Right ventricle myocardium superior (tissue), 1 donor: ENCODE measurements at regions of chr5 and their contacts with region 1.

Region 1: DNA sequence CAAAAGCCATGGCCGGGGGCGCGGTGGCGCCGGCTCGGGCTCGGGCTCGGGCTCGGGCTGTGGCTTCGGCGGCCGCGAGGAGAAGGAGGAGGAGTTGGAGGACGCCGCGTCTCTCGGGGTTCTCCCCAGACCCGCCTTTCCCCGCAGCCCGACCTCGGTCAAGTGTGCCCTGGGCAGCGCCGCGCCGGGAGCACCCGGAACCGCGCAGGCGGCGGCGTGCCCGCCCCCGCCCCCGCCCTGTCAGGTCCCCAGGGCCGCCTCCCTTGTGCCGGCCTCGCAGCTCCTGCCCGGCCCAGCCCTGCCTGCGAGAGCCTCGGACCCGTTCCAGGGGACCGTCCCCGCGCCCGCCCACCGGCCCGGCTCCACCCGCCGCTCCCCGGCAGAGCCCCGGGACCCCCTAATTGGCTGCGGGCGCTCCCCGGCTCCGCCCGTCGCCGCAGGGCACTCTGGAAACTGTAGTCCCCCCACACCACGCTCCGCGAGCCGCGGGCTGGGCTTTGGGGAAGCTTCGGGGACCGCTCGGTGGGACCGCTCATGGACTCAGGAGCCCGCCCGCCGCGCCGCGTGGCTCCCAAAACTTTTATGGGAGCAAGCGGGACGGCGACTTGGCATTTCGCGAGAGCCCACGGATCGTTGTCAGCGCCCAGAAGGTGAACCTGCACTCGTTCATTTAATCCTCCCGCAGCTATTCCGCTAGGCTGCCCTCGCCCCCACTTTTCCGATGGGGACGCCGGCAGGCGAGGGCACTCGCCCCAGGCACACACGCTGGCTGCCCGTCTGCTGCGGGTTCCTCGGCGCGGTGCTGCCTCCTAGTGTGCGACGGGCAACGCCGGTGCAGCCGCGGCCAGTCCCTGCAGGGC is at the start of gene STK10:
- DNase-seq: peak; percentile 96
- ATAC-seq: peak; percentile 96
- total RNA-seq, gene STK10: 8.8 TPM

Region 2: GRCh38 chr5:171913987-171914273 is 274.3 kb before region 1 on chr5:
- intact Hi-C with region 1: loop called (anchors 10 kb)
- DNase-seq: no peak
- ATAC-seq: no peak

Region 3: DNA sequence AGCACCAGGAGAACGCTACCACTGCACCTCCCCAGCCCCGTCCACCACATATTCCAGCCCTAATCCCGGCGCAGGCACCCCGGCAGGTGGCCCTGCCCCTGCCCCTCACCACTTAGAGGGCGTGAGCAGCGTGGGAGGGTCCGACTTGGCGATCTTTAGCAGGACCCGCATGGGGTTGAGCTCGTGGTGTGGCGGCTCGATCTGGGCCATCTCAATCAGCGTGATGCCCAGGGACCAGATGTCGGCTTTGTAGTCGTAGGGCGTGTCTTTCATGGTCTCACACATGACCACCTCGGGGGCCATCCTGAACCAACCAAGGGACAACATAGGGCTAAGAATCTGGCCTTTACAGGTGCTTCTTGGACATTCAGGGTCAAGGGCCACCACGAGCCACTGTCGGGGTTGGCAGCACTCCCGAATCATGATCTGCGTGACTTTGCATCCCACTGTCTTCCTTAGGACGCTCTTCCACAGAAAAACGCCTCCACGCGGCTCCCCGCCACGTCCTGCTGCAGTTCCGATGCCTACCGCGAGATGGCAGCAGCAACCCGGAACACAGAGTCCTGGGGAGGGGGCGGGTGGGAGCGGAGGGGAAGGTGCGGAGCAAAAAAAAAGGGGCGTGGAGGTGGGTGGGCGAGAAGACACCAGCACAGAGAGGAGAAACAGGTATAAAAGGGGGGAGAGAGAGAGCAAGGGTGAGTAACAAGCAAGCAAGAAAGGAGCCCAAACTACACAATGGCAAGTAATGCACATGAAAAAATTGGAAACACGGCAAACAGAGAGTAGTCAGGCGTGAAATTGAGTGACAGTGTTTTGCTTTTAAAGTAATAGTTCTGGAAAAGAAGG is 81.5 kb before region 1 on chr5:
- intact Hi-C with region 1: loop called (anchors 2 kb)
- DNase-seq: peak; percentile 81
- ATAC-seq: peak; percentile 54

Region 4: GRCh38 chr5:172477466-172477865 is 289.2 kb after region 1 on chr5:
- intact Hi-C with region 1: no loop called
- DNase-seq: no peak
- ATAC-seq: peak; percentile 32

Region 5: DNA sequence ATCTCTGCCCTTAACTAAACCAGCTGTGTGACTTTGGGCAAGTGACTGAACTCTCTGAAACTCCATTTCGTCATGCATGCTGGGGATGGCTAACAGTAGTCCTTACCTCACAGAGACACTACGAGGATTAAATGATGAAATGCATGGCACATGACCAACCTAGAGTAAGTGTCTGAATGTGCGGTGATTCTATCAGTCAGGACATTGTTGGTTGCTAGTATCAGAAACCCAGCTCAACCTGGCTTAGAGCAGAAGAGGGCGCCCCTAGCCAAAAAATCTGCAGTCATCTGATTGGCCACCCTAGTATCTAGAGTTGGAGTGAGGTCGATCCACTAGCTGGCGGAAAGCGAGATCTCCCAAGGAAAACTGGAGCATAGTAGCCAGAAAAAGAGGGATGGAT is 478.0 kb after region 1 on chr5:
- intact Hi-C with region 1: no loop called
- DNase-seq: no peak
- ATAC-seq: peak; percentile 64